Posterior cingulate gyrus (tissue), 11 donors: ENCODE measurements at regions of chr2 and their contacts with region 1.

Region 1: GRCh38 chr2:75640621-75641121 is 5.9 kb upstream of the MRPL19 start:
- DNase-seq: peak; percentile 43 to 95 (median 76)

Region 2: DNA sequence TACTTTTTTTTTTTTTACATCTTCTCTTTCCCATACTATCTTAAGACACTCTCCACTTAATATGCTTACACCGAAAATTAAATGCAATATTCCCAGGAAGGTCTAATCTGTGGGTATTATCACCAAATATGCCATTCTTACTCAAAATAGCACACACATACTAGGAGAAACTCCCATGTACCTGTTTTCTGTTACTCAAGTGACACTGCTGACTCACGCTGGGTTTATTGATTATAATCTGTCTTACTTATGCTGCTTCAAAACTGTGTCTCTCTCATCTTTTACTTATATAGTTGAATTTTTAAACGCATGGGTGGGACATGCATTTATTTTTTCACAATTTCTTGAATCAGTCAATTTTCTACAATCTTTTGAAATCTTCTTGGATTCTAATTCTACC is 35.8 kb after region 1 on chr2:
- intact Hi-C with region 1: loop called (anchors 2 kb)
- DNase-seq: no peak

Region 3: GRCh38 chr2:75716406-75716805 is 75.7 kb after region 1 on chr2:
- intact Hi-C with region 1: loop called (anchors 1 kb)
- DNase-seq: no peak